ENCODE measurements at regions of chr10 and their contacts with region 1.

Region 1: DNA sequence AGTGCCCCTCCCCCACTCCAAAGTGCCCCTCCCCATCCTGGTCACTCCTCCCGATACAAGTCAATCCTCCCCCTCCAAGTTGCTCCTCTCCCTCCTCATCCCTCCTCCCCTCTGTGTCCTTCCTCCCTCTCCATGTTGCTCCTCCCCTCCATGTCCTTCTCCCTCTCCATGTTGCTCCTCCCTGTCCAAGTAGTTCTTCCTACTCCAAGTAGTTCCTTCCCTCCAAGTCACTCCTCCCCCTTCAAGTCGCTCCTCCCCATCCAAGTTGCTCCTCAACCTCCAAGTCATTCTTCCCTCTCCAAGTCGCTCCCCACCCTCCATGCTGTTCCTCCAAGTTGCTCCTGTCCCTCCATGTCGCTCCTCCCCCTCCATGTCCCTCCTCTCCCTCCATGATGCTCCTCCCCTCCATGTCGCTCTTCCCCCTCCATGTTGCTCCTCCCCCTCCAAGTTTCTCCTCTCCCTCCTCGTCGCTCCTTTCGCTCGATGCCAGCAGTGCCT is 8.6 kb upstream of the WBP1L start:
- DNase-seq: no peak
- ATAC-seq: peak in 3 of 4 donors; percentile 45 to 59 (median 54)
- H3K4me3 ChIP-seq: no peak overlapping the region
- H3K27ac ChIP-seq: no peak overlapping the region
- H3K4me1 ChIP-seq: peaks cover 0 to 19% (median 10%) of the 10 kb centered on the region in 12 donors
- H3K27me3 ChIP-seq: no peaks in the 10 kb centered on the region
- CTCF ChIP-seq: no peak
- POLR2A ChIP-seq: no peak

Region 2: DNA sequence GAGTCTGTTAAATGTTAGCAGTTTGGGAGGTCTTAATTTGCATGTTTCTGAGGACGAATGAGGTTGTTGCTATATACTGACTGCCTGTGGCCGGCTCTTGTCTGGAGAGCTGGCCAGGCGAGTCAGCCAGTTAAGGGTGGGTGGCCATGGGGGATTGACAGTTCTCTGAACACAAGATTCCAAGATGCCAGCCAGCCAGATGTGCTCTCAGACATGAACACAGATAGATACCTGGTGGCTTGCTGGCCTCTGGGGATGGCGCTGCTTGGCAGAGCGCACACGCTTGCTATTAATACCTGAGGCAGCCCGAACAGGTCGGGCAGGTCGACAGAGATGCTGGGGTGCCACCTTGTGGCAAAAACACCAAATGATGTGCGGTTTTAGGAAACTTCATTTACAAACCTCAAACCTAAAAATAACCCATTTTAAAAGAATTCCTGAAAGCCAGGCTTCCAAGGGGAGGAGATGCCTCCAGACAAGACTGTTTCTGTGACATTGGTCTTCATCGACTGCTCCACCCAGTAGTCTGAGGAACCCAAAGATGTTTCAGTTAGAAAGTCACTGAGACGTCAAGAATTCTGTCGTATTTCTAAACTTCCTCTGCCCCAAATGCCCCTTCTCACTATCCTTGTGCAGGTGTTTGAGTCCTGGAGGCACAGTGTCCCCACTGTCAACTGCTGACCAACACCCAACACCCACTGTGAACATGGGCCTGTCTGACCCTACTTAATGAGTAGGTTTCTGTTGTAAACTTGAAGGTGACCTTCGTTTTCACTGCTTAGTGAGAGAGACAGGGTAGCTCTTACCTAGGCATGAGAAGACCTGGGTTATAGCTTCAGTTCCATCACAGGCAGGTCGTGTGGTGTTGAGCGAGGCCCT is 334.6 kb after region 1 on chr10:
- intact Hi-C with region 1: loop called in 3 of 10 experiments (anchors 5 kb)
- DNase-seq: peak in 4 of 5 donors; percentile 37 to 68 (median 56)
- ATAC-seq: peak; percentile 40 to 84 (median 73)
- H3K4me3 ChIP-seq: no peak overlapping the region
- H3K27ac ChIP-seq: no peak overlapping the region
- H3K4me1 ChIP-seq: peaks cover 0 to 18% (median 0%) of the 10 kb centered on the region in 12 donors
- H3K27me3 ChIP-seq: no peaks in the 10 kb centered on the region
- CTCF ChIP-seq: peak; percentile 47 to 77 (median 64)
- POLR2A ChIP-seq: no peak